Mammary epithelial cell (primary cell): ENCODE measurements at regions of chr1 and their contacts with region 1.

Region 1: DNA sequence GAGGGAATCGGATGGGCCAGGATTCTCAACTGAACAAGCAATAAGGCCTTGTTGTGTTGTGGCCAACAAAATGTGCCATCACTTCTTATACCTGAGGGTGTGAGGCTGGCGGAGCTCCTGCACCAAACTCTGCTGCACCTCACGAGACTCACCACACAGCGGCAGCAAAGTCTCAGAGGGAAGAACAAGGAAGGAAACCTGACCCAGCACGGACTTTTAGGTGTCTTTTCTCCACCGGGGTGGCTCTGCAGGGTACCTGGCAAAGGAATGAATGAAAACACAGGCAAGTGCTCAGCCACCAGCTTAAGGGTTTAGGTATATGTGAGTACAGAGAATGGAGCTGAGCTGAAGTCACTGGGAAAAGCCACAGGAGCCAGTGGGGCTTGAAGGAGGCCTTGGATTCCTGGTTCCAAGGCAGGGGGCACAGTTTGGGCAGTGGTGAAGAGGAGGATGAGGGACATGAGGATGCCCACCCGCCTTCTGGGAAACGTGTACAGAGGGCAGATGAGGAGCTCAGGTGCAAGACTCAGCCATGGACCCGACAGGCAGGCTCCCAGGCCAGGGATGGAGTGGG is 31.1 kb upstream of the HSD3B1 start:
- DNase-seq: peak; percentile 64
- H3K4me3 ChIP-seq: no peak overlapping the region
- H3K27ac ChIP-seq: no peak overlapping the region
- H3K4me1 ChIP-seq: no peaks in the 10 kb centered on the region
- H3K27me3 ChIP-seq: no peaks in the 10 kb centered on the region
- CTCF ChIP-seq: peak; percentile 92 to 95

Region 2: GRCh38 chr1:119286587-119287181 is 189.3 kb before region 1 on chr1:
- CTCF ChIA-PET with region 1: no interaction called
- dilution Hi-C with region 1: no loop called
- in situ Hi-C with region 1: no loop called
- intact Hi-C with region 1: no loop called
- DNase-seq: peak; percentile 51
- H3K4me3 ChIP-seq: no peak overlapping the region
- H3K27ac ChIP-seq: no peak overlapping the region
- H3K4me1 ChIP-seq: peaks cover 17% of the 10 kb centered on the region
- H3K27me3 ChIP-seq: no peaks in the 10 kb centered on the region
- CTCF ChIP-seq: peak; percentile 49 to 74

Region 3: GRCh38 chr1:119372490-119373086 is 103.4 kb before region 1 on chr1:
- CTCF ChIA-PET with region 1: no interaction called
- dilution Hi-C with region 1: no loop called
- in situ Hi-C with region 1: no loop called
- intact Hi-C with region 1: loop called (anchors 1 kb)
- DNase-seq: peak; percentile 57
- H3K4me3 ChIP-seq: no peak overlapping the region
- H3K27ac ChIP-seq: no peak overlapping the region
- H3K4me1 ChIP-seq: peaks cover 16% of the 10 kb centered on the region
- H3K27me3 ChIP-seq: no peaks in the 10 kb centered on the region
- CTCF ChIP-seq: peak; percentile 26 to 48

Region 4: GRCh38 chr1:119506951-119507350 is 31.0 kb after region 1 on chr1 and contains the start of gene HSD3B1:
- CTCF ChIA-PET with region 1: no interaction called
- dilution Hi-C with region 1: loop called (anchors 5 kb)
- in situ Hi-C with region 1: no loop called
- intact Hi-C with region 1: no loop called
- DNase-seq: no peak
- H3K4me3 ChIP-seq: no peak within 1 kb of the TSS
- H3K27ac ChIP-seq: no peak within 1 kb of the TSS
- H3K4me1 ChIP-seq: peaks cover 14% of the 10 kb centered on the region
- H3K27me3 ChIP-seq: no peaks in the 10 kb centered on the region
- CTCF ChIP-seq: no peak
- total RNA-seq, gene HSD3B1: 0.17 TPM in 1 of 2 donors, not detected in the other

Region 5: GRCh38 chr1:119544165-119544762 is 68.3 kb after region 1 on chr1:
- CTCF ChIA-PET with region 1: no interaction called
- dilution Hi-C with region 1: no loop called
- in situ Hi-C with region 1: no loop called
- intact Hi-C with region 1: loop called (anchors 2 kb)
- DNase-seq: no peak
- H3K4me3 ChIP-seq: no peak overlapping the region
- H3K27ac ChIP-seq: no peak overlapping the region
- H3K4me1 ChIP-seq: peaks cover 8% of the 10 kb centered on the region
- H3K27me3 ChIP-seq: no peaks in the 10 kb centered on the region
- CTCF ChIP-seq: peak; percentile 59 to 63

Region 6: GRCh38 chr1:119582801-119583200 is 106.8 kb after region 1 on chr1:
- CTCF ChIA-PET with region 1: no interaction called
- dilution Hi-C with region 1: no loop called
- in situ Hi-C with region 1: no loop called
- intact Hi-C with region 1: loop called (anchors 2 kb)
- DNase-seq: peak; percentile 78
- H3K4me3 ChIP-seq: no peak overlapping the region
- H3K27ac ChIP-seq: no peak overlapping the region
- H3K4me1 ChIP-seq: peaks cover 4% of the 10 kb centered on the region
- H3K27me3 ChIP-seq: no peaks in the 10 kb centered on the region
- CTCF ChIP-seq: peak; percentile 49 to 81

Region 7: GRCh38 chr1:119651641-119652040 is 175.7 kb after region 1 on chr1:
- CTCF ChIA-PET with region 1: no interaction called
- dilution Hi-C with region 1: no loop called
- in situ Hi-C with region 1: no loop called
- intact Hi-C with region 1: no loop called
- DNase-seq: peak; percentile 37
- H3K4me3 ChIP-seq: no peak overlapping the region
- H3K27ac ChIP-seq: no peak overlapping the region
- H3K4me1 ChIP-seq: peaks cover 28% of the 10 kb centered on the region
- H3K27me3 ChIP-seq: no peaks in the 10 kb centered on the region
- CTCF ChIP-seq: no peak

Region 8: GRCh38 chr1:119662034-119662437 is 186.1 kb after region 1 on chr1:
- CTCF ChIA-PET with region 1: no interaction called
- dilution Hi-C with region 1: no loop called
- in situ Hi-C with region 1: no loop called
- intact Hi-C with region 1: loop called (anchors 10 kb)
- DNase-seq: no peak
- H3K4me3 ChIP-seq: no peak overlapping the region
- H3K27ac ChIP-seq: no peak overlapping the region
- H3K4me1 ChIP-seq: no peaks in the 10 kb centered on the region
- H3K27me3 ChIP-seq: no peaks in the 10 kb centered on the region
- CTCF ChIP-seq: no peak